ENCODE measurements at regions of chr1 and their contacts with region 1.

Region 1: DNA sequence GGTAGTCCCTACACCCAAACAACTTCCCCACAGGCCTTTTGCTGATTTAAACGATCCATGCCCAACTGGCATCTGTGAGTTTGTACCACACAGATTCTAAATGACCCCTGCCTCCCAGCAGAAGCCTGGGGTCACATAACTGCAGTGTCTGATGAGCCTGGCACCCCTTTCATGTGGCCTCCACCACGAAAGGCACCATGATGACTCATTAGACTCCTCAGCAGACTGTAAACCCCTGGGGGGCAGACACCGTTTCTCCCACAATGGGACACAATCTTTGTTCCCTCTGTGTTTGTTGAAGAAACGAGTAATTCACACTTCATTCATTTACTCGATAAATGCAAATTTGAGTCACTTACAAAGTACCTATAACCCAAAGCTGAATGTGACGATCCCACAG is 81.6 kb downstream of the CCDC185 start:
- DNase-seq: no peak
- ATAC-seq: no peak

Region 2: DNA sequence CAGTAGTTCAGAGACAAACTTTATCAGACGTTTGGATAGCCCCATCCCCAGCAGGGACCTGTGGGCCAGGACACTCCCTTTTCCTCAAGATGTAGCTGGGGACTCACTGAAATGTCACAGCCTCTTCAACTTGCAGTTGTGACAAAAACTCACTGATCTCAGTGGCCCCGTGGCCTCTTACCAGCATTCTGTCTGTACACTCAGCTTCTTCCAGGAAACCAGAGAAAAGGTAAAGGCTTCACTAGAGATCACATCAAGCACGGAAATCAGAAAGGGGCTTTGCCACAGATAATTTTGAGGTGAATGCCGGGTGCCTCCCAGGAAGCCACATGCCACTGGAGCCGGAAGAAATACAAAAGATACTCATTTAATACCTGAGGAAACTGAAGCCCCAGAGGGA is 40.6 kb after region 1 on chr1:
- intact Hi-C with region 1: loop called (anchors 1 kb)
- DNase-seq: no peak
- ATAC-seq: no peak